ENCODE measurements at regions of chr5 and their contacts with region 1.

Region 1: DNA sequence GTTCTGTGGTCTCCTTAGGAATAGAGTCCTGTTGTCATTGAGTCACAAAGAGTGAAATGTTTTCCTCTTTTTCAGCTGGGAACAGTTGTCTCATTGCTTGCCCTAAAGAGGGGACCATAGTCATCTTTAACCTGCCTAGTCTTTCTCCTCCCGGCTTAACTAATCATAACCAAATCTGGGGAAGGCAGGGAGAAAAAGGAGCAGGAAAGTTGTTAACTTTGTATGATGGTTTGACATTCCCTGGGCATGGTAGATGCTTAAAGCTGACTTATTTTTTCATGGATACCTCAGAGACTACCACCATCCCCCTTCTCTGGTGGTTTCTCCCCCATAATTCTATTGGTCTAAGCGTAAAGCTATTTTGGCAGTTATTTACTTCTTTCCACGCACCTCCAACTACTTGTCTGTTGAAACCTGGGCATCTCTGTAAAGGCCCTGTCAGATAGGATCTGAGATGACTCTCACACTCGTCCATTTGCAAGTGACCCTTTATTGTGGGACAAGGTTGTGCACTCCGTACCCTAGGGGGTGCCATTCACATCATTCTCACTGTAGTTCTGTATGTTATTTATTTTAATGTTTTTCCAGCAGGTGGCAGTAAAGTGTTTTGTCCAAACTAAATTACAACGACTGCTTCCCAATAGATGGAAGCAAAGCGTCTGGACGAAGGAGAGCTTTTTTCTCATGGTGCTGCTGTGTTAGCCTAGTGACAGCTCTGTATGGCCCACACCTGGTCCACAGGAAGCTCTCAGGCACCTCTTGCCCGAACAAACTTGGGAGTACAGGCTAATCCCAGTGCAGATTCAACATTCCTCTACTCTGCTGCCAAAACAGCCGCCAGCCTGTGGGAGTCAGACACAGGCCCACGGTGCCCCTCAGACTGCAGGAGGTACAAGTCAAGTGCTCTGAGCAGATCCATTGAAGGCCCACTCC is 3.0 kb upstream of the FAM13B start:
- DNase-seq: peak; percentile 68 to 81 (median 74)
- ATAC-seq: peak; percentile 69
- H3K4me3 ChIP-seq: no peak overlapping the region
- H3K27ac ChIP-seq: no peak overlapping the region
- H3K4me1 ChIP-seq: peaks cover 23% of the 10 kb centered on the region
- H3K27me3 ChIP-seq: no peaks in the 10 kb centered on the region
- CTCF ChIP-seq: peak; percentile 79 to 99 (median 96)
- POLR2A ChIP-seq: no peak

Region 2: GRCh38 chr5:137282216-137282615 is 753.7 kb before region 1 on chr5:
- intact Hi-C with region 1: no loop called
- DNase-seq: no peak
- ATAC-seq: no peak
- H3K4me3 ChIP-seq: no peak overlapping the region
- H3K27ac ChIP-seq: no peak overlapping the region
- H3K4me1 ChIP-seq: peaks cover 6% of the 10 kb centered on the region
- H3K27me3 ChIP-seq: no peaks in the 10 kb centered on the region
- CTCF ChIP-seq: no peak
- POLR2A ChIP-seq: no peak

Region 3: DNA sequence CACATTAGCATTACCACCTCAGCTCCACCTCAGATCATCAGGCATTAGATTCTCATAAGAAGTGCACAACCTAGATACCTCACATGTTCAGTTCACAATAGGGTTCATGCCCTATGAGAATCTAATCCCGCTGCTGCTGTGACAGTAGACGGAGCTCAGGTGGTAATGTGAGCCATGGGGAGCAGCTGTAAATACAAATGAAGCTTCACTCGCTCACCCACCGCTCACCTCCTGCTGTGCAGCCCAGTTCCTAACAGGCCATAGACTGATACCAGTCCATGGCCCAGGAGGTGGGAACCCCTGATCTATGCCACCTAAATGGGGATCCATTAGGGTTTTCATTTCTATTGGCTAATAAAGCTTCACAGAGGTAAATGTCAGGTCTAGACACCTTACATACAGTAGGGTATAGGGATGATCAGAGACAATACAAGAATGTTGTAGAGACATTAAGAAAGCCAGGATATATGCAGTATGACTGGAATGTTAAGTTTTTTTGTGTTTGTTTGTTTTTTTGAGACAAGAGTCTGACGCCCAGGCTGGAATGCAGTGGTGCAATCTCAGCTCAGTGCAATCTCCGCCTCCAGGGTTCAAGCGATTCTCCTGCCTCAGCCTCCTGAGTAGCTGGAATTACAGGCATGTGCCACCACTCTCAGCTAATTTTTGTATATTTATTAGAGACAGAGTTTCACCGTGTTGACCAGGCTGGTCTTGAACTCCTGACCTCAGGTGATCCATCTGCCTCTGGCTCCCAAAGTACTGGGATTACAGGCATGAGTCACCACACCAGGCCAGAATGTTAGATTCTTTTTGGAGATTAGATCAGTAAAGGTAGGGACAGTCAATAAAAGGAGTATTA is 275.3 kb before region 1 on chr5:
- intact Hi-C with region 1: loop called (anchors 10 kb)
- DNase-seq: no peak
- ATAC-seq: no peak
- H3K4me3 ChIP-seq: no peak overlapping the region
- H3K27ac ChIP-seq: no peak overlapping the region
- H3K4me1 ChIP-seq: peaks cover under 1% of the 10 kb centered on the region
- H3K27me3 ChIP-seq: no peaks in the 10 kb centered on the region
- CTCF ChIP-seq: no peak
- POLR2A ChIP-seq: no peak